ENCODE measurements at regions of chr12 and their contacts with region 1.

Region 1: DNA sequence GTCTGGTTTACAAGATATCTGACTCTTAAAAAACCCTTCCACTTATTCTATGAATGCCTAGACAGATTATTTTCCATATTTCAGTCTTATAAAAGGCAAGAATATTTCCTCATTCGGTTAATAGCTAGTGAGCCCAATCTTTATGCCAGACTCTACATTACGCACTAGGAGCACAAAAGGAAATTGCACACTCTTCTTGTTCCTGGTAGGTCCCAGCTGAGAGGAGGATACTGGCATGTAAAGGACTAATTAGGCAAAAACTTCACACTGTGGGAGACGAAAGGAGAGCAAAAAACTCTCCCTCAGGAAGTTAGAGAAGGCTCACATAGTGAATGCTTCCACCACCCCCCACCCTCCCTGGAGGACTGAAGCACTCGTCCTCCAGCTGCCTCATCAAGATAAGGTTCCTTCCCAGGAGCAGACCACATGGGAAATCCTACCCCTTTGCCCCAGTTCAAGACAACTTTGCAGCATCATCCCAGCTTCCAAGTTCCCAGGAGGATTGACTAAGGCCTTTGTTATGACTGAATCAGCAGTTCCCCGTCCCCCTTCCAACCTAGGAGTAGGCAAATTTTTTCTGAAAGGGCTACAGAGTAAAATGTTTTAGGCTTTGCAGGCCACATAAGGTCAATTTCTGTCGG is 14.5 kb downstream of the CAPZA3 start:
- DNase-seq: peak; percentile 39
- H3K4me3 ChIP-seq: no peak overlapping the region
- H3K27ac ChIP-seq: peak overlapping the region; percentile 89
- H3K4me1 ChIP-seq: peaks cover 64% of the 10 kb centered on the region
- H3K27me3 ChIP-seq: no peaks in the 10 kb centered on the region
- CTCF ChIP-seq: no peak

Region 2: GRCh38 chr12:19031032-19031431 is 278.6 kb after region 1 on chr12:
- intact Hi-C with region 1: loop called (anchors 10 kb)
- DNase-seq: no peak
- H3K4me3 ChIP-seq: no peak overlapping the region
- H3K27ac ChIP-seq: no peak overlapping the region
- H3K4me1 ChIP-seq: peaks cover 11% of the 10 kb centered on the region
- H3K27me3 ChIP-seq: no peaks in the 10 kb centered on the region
- CTCF ChIP-seq: no peak